ENCODE measurements at regions of chr17 and their contacts with region 1.

Region 1: GRCh38 chr17:60102632-60103096 is 23.9 kb upstream of the HEATR6 start:
- DNase-seq: peak in 1 of 2 donors; percentile 29
- ATAC-seq: peak in 6 of 8 donors; percentile 52 to 81 (median 70)
- H3K4me3 ChIP-seq: peak overlapping the region in 9 of 10 donors; percentile 16 to 45 (median 34)
- H3K27ac ChIP-seq: peak overlapping the region in 4 of 10 donors; percentile 45 to 60 (median 53)
- H3K4me1 ChIP-seq: peaks cover 0 to 17% (median 0%) of the 10 kb centered on the region in 9 donors
- H3K27me3 ChIP-seq: no peaks in the 10 kb centered on the region
- CTCF ChIP-seq: no peak

Region 2: GRCh38 chr17:60421273-60421934 is 318.7 kb after region 1 on chr17:
- intact Hi-C with region 1: loop called in 2 of 10 experiments (anchors 5 to 10 kb)
- DNase-seq: peak; percentile 56 to 76
- ATAC-seq: peak; percentile 92 to 97 (median 95)
- H3K4me3 ChIP-seq: peak overlapping the region; percentile 36 to 62 (median 54)
- H3K27ac ChIP-seq: peak overlapping the region in 5 of 10 donors; percentile 12 to 85 (median 47)
- H3K4me1 ChIP-seq: peaks cover 0 to 22% (median 13%) of the 10 kb centered on the region in 9 donors
- H3K27me3 ChIP-seq: no peaks in the 10 kb centered on the region
- CTCF ChIP-seq: peak; percentile 69 to 99 (median 94)

Measured in heart right ventricle (tissue), 16 donors.